ENCODE measurements at regions of chr1 and their contacts with region 1.

Region 1: GRCh38 chr1:157490467-157491165 is 61.7 kb downstream of the FCRL5 start:
- DNase-seq: peak; percentile 86
- ATAC-seq: peak; percentile 68
- H3K4me3 ChIP-seq: no peak overlapping the region
- H3K27ac ChIP-seq: no peak overlapping the region
- H3K4me1 ChIP-seq: no peaks in the 10 kb centered on the region
- H3K27me3 ChIP-seq: peaks cover 18% of the 10 kb centered on the region; the same call in 1 of the 2 replicates
- CTCF ChIP-seq: peak; percentile 77

Region 2: DNA sequence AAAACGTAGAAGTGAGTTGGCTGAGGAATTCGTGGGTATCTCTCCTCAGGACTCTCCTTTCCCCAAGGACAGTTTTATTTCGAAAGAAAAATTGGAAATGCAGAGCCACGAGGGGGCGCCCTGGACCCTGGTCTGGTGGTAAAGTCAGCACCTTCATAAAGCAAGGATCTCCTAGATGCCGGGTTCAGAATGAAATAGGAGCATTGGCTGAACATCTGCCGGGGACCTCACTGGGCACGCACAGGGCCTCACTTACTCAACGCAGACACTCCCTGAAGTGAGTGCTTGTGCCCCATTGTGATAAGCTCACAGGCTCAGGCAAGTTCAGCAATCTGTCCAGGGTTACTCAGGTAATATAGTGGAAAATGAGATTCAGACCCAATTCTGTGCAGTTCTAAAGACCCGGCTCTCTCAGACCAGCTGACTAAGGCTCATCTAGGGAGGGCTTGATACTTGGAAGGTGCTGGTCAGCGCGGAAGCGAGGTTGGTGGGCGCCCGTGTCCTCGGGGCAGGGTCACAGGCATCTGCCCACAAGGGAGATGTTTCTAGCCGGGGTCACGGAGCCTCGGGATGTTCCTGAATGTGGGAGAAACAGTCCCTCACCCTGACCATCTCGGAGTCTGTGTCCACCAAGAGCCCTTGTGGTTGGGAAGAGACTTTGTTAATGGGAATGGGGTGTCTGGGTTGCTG is 296.8 kb before region 1 on chr1:
- CTCF ChIA-PET with region 1: no interaction called
- POLR2A ChIA-PET with region 1: no interaction called
- intact Hi-C with region 1: loop called (anchors 1 kb)
- DNase-seq: peak; percentile 83
- ATAC-seq: peak; percentile 71
- H3K4me3 ChIP-seq: no peak overlapping the region
- H3K27ac ChIP-seq: no peak overlapping the region
- H3K4me1 ChIP-seq: no peaks in the 10 kb centered on the region
- H3K27me3 ChIP-seq: peaks cover 40% of the 10 kb centered on the region
- CTCF ChIP-seq: peak; percentile 89

Region 3: GRCh38 chr1:157369808-157370521 is 120.7 kb before region 1 on chr1:
- CTCF ChIA-PET with region 1: no interaction called
- POLR2A ChIA-PET with region 1: no interaction called
- intact Hi-C with region 1: loop called (anchors 1 kb)
- DNase-seq: peak; percentile 88
- ATAC-seq: peak; percentile 88
- H3K4me3 ChIP-seq: no peak overlapping the region
- H3K27ac ChIP-seq: no peak overlapping the region
- H3K4me1 ChIP-seq: no peaks in the 10 kb centered on the region
- H3K27me3 ChIP-seq: peaks cover 24% of the 10 kb centered on the region
- CTCF ChIP-seq: peak; percentile 89

Region 4: GRCh38 chr1:157380523-157380922 is 110.1 kb before region 1 on chr1:
- CTCF ChIA-PET with region 1: no interaction called
- POLR2A ChIA-PET with region 1: no interaction called
- intact Hi-C with region 1: loop called (anchors 1 kb)
- DNase-seq: no peak
- ATAC-seq: no peak
- H3K4me3 ChIP-seq: no peak overlapping the region
- H3K27ac ChIP-seq: no peak overlapping the region
- H3K4me1 ChIP-seq: no peaks in the 10 kb centered on the region
- H3K27me3 ChIP-seq: peaks cover 76% of the 10 kb centered on the region
- CTCF ChIP-seq: no peak

Region 5: GRCh38 chr1:157403203-157403602 is 87.4 kb before region 1 on chr1:
- CTCF ChIA-PET with region 1: no interaction called
- POLR2A ChIA-PET with region 1: no interaction called
- intact Hi-C with region 1: no loop called
- DNase-seq: peak; percentile 31
- ATAC-seq: no peak
- H3K4me3 ChIP-seq: no peak overlapping the region
- H3K27ac ChIP-seq: no peak overlapping the region
- H3K4me1 ChIP-seq: no peaks in the 10 kb centered on the region
- H3K27me3 ChIP-seq: peaks cover 48% of the 10 kb centered on the region
- CTCF ChIP-seq: no peak

Region 6: GRCh38 chr1:157419845-157420542 is 70.6 kb before region 1 on chr1:
- CTCF ChIA-PET with region 1: no interaction called
- POLR2A ChIA-PET with region 1: no interaction called
- intact Hi-C with region 1: no loop called
- DNase-seq: no peak
- ATAC-seq: no peak
- H3K4me3 ChIP-seq: no peak overlapping the region
- H3K27ac ChIP-seq: no peak overlapping the region
- H3K4me1 ChIP-seq: no peaks in the 10 kb centered on the region
- H3K27me3 ChIP-seq: peaks cover 32% of the 10 kb centered on the region
- CTCF ChIP-seq: no peak

Region 7: DNA sequence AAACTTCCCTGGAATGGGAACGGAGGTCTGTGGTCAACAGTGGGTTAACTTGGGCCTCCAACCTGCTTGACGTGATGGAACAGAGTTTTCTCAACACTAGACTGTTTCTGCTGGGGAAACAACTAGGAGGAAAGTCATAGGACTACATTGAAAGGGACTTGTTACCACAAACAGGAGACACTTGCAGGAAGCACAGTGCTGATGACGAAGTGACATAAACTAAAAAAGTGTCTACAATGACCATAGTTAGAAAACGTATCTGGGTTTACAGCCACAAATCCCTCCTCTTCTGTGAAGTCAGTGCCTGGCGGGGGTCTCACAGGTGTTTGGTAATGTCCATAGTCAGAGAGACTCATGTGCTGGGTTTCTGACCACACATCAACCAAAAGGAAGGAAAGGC is 24.6 kb before region 1 on chr1:
- CTCF ChIA-PET with region 1: no interaction called
- POLR2A ChIA-PET with region 1: no interaction called
- intact Hi-C with region 1: no loop called
- DNase-seq: no peak
- ATAC-seq: no peak
- H3K4me3 ChIP-seq: no peak overlapping the region
- H3K27ac ChIP-seq: no peak overlapping the region
- H3K4me1 ChIP-seq: no peaks in the 10 kb centered on the region
- H3K27me3 ChIP-seq: peaks cover 13% of the 10 kb centered on the region; the same call in 1 of the 2 replicates
- CTCF ChIP-seq: no peak